GM18951 (cell line): ENCODE measurements at regions of chr2 and their contacts with region 1.

Region 1: GRCh38 chr2:131445896-131446295 is 30.0 kb upstream of the TUBA3D start:
- POLR2A ChIP-seq: no peak

Region 2: GRCh38 chr2:130231656-130232055 is 1214.2 kb before region 1 on chr2:
- in situ Hi-C with region 1: loop called (anchors 5 kb)
- POLR2A ChIP-seq: no peak

Region 3: GRCh38 chr2:131365452-131365851 is 80.4 kb before region 1 on chr2:
- in situ Hi-C with region 1: no loop called
- POLR2A ChIP-seq: no peak